K562 (cell line): ENCODE measurements at regions of chr7 and their contacts with region 1.

Region 1: DNA sequence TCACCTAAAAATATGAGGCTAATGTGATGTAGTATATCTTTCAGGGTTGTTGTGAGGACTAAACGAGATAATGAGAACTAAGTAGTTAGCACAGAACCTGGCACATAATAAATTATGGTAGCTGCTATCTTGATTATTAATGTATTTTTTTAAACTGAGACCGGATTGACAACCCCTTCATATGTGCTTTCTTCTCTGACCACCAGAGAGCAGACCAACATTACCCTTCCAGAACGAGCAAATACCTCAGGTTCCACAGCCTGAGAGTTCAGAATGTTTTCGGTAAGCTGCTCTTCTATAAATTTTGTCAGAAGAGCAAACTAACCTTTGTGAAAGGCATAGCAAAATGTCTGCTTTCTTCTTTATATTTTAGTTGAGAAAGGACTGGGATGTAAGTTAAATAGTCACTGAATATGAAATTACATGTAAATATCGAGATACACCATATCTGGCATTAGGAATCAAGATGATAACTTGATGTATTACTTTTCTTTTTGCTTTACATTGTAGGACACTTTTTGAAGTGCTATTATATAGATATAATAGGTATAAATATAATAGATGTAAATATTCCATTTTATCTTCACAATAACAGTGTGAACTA is 13.6 kb upstream of the BPGM start:
- DNase-seq: peak; percentile 54 to 79 (median 68)
- ATAC-seq: peak; percentile 94
- H3K4me3 ChIP-seq: no peak overlapping the region
- H3K27ac ChIP-seq: no peak overlapping the region
- H3K4me1 ChIP-seq: peaks cover 0 to 6% of the 10 kb centered on the region in 2 experiments; a peak in 2 of 5 replicates
- H3K27me3 ChIP-seq: peaks cover 0 to 5% of the 10 kb centered on the region in 2 experiments; a peak in 1 of 5 replicates
- CTCF ChIP-seq: peak; percentile 84 to 97 (median 88)
- EP300 ChIP-seq: no peak
- POLR2A ChIP-seq: no peak
- RAD21 ChIP-seq: peak; percentile 95 to 98

Region 2: DNA sequence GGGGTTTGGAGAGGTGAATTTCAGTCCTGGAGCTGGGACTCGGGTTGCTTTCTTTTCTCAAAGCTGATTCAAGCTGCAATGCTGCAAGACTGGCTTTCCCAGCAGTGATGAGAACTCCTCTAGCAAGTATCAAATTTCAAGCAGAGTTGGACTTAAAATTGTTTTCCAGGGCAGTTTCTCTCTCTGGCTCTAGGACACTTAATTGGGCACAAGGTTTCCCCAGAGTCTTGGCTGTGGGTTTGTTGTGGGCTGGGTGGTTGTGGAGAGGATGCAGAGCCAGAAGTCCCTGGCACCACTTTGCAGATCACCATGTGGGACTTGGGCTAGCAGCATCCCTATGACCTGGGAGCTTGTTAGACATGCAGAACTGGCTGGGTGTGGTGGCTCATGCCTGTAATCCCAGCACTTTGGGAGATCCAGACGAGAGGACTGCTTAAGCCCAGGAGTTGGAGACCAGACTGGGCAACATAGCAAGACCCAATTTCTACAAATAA is 67.3 kb before region 1 on chr7:
- CTCF ChIA-PET with region 1: no interaction called
- POLR2A ChIA-PET with region 1: no interaction called
- in situ Hi-C with region 1: no loop called
- intact Hi-C with region 1: no loop called
- DNase-seq: no peak
- ATAC-seq: no peak
- H3K4me3 ChIP-seq: no peak overlapping the region
- H3K27ac ChIP-seq: no peak overlapping the region
- H3K4me1 ChIP-seq: no peaks in the 10 kb centered on the region
- H3K27me3 ChIP-seq: peaks cover 0 to 19% of the 10 kb centered on the region in 2 experiments; a peak in 3 of 5 replicates
- CTCF ChIP-seq: no peak
- EP300 ChIP-seq: no peak
- POLR2A ChIP-seq: no peak
- RAD21 ChIP-seq: no peak

Region 3: GRCh38 chr7:134669845-134670373 is 36.9 kb after region 1 on chr7:
- CTCF ChIA-PET with region 1: no interaction called
- POLR2A ChIA-PET with region 1: interaction called, 3 read pairs
- in situ Hi-C with region 1: no loop called
- intact Hi-C with region 1: loop called (anchors 1 kb)
- DNase-seq: peak in 1 of 4 experiments; percentile 50
- ATAC-seq: peak; percentile 87
- H3K4me3 ChIP-seq: no peak overlapping the region
- H3K27ac ChIP-seq: no peak overlapping the region
- H3K4me1 ChIP-seq: peaks cover 0 to 7% of the 10 kb centered on the region in 2 experiments; a peak in 4 of 5 replicates
- H3K27me3 ChIP-seq: no peaks in the 10 kb centered on the region
- CTCF ChIP-seq: no peak
- EP300 ChIP-seq: no peak
- POLR2A ChIP-seq: no peak
- RAD21 ChIP-seq: no peak; a peak in 1 of 4 replicates

Region 4: DNA sequence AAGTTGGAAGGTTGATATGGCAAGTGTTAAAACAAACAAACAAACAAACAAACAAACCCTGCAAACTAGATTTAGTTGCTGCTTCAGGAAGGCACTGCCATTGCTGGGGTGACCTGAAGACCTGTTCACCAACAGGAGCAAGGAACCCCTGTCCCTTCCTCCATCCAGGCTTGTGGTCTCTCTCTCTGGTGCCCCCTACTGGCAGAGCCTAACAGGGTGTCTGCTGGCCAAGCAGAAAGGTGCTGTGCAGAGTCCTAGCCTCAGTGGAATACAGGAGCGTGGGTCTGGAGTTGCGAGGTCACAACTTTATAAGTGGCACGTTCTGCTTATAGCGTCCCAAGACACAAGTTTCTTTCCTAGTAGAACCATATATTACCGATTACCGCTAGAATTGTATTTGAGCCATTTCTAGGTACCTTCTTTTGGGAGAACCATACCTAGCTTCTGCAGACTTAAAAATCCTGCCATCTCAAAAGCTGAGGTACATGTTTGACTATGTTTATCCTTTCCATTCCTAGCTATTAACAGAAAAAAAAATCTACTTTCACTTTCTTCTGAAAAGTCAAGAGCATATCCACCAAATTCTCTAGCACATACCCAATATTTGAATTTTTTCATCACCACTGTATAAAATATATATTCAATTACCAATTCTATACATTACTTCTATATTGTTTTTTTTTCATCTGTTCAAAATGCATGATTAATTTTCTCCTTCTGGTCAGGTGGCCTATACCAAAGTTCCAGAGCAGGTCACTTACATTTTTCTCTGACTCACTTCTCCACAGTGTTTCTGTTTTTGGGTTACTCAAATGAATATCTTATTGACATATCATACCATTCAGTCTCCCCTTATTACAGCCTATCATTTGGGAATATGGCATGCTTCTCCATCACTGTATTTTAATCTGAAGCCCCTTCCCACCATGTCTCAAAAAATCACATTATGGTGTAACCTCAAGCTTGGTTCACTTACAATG is 117.3 kb after region 1 on chr7:
- CTCF ChIA-PET with region 1: interaction called, 3 read pairs
- POLR2A ChIA-PET with region 1: no interaction called
- in situ Hi-C with region 1: no loop called
- intact Hi-C with region 1: loop called (anchors 1 kb)
- DNase-seq: peak; percentile 77 to 90 (median 86)
- ATAC-seq: peak; percentile 99
- H3K4me3 ChIP-seq: no peak overlapping the region
- H3K27ac ChIP-seq: no peak overlapping the region
- H3K4me1 ChIP-seq: no peaks in the 10 kb centered on the region
- H3K27me3 ChIP-seq: peaks cover 0 to 16% of the 10 kb centered on the region in 2 experiments; a peak in 3 of 5 replicates
- CTCF ChIP-seq: peak; percentile 86 to 99 (median 92)
- EP300 ChIP-seq: no peak
- POLR2A ChIP-seq: no peak
- RAD21 ChIP-seq: peak; percentile 29 to 68; a peak in 3 of 4 replicates

Region 5: DNA sequence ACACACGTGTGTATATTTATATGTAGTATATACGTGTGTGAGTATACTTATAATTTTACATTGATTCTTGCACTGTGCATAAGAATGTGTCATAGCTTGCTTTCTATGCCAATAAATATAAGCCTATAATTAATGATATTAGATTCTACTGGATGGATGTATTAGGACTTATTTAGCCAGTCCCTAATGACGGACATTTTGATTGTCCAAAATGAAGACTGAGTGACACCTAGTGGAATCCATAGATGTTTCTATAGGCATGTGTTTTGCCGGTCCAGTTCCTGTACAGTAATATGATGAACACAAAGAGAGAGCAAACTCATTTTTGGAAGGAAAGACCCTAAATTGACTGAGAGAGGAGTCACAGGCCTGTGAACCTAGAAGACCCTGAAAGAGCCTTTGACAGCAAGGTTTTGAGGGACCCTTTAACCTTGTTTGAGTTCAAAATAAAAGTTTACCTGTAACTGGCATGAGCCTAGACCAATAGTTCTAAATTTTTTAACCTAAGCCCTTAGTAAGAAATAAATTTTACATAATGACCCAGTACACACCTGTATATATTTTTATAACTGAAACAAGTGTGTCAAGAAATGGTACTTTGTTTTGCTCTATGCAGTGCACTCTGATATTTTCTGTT is 310.8 kb after region 1 on chr7:
- CTCF ChIA-PET with region 1: interaction called, 14 read pairs
- POLR2A ChIA-PET with region 1: no interaction called
- in situ Hi-C with region 1: loop called (anchors 5 kb)
- intact Hi-C with region 1: loop called (anchors 1 kb)
- DNase-seq: peak in 2 of 4 experiments; percentile 44 to 51
- ATAC-seq: peak; percentile 89
- H3K4me3 ChIP-seq: no peak overlapping the region
- H3K27ac ChIP-seq: no peak overlapping the region
- H3K4me1 ChIP-seq: no peaks in the 10 kb centered on the region; a peak in 1 of 5 replicates
- H3K27me3 ChIP-seq: peaks cover 18 to 26% of the 10 kb centered on the region in 2 experiments; a peak in 4 of 5 replicates
- CTCF ChIP-seq: peak; percentile 52 to 75 (median 64); a peak in 5 of 6 replicates
- EP300 ChIP-seq: no peak
- POLR2A ChIP-seq: no peak
- RAD21 ChIP-seq: peak; percentile 87

Region 6: DNA sequence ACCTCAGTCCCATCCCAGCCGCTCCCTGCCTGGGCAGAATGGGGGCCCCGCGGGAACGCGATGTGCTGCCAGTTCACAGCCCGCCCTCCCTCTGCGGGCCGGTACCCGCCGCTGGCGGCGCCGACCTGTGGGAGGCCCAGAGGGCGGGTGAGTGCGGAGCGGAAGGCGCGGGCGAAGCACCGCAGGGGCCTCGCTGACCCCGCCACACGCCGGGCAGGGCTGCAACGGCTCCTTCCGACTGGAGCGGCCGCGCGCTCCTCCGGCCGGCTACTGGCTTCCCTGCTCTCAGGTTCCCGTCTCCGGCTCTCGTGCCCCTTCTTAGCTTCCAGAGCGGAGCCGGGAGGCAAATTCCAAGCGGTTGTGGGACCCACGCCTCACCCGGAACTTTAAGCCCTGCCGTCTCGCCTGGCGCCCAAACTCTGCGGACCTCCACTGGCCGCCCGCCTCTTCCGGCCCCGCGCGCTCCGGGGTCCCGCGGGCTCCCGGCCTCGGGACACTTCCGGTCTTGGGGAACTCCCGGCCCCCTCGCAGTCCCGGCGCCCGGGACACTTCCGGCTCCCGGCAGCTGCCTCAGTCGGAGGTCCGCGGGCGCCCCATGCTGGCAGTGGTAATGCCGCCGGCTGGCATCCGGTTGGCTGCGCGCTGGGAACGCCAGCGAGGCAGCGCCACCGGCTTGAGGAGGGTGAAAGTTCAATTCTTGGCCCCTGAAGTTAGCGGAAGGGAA is 537.4 kb after region 1 on chr7 and contains the start of gene CYREN:
- CTCF ChIA-PET with region 1: interaction called, 3 read pairs
- POLR2A ChIA-PET with region 1: interaction called, 3 read pairs
- in situ Hi-C with region 1: no loop called
- intact Hi-C with region 1: loop called (anchors 5 kb)
- DNase-seq: peak; percentile 97 to 98 (median 98)
- ATAC-seq: peak; percentile 95
- H3K4me3 ChIP-seq: peak within 1 kb of the TSS; percentile 83
- H3K27ac ChIP-seq: peak within 1 kb of the TSS; percentile 95
- H3K4me1 ChIP-seq: peaks cover 15 to 30% of the 10 kb centered on the region in 2 experiments; a peak in 4 of 5 replicates
- H3K27me3 ChIP-seq: no peaks in the 10 kb centered on the region
- CTCF ChIP-seq: peak; percentile 92 to 99 (median 98)
- EP300 ChIP-seq: peak; percentile 49; the same call in 1 of the 2 replicates
- POLR2A ChIP-seq: peak; percentile 98
- RAD21 ChIP-seq: peak; percentile 98 to 99
- polyA plus RNA-seq, gene CYREN: 13.9 to 25.5 TPM

Region 7: GRCh38 chr7:136056651-136057231 is 1423.7 kb after region 1 on chr7:
- CTCF ChIA-PET with region 1: no interaction called
- POLR2A ChIA-PET with region 1: no interaction called
- in situ Hi-C with region 1: no loop called
- intact Hi-C with region 1: no loop called
- DNase-seq: no peak
- ATAC-seq: peak; percentile 17; the same call in 1 of the 3 replicates
- H3K4me3 ChIP-seq: no peak overlapping the region
- H3K27ac ChIP-seq: no peak overlapping the region
- H3K4me1 ChIP-seq: peaks cover 0 to 31% of the 10 kb centered on the region in 2 experiments; a peak in 3 of 5 replicates
- H3K27me3 ChIP-seq: no peaks in the 10 kb centered on the region
- CTCF ChIP-seq: no peak
- EP300 ChIP-seq: no peak
- POLR2A ChIP-seq: no peak
- RAD21 ChIP-seq: no peak